ENCODE measurements at regions of chr10 and their contacts with region 1.

Region 1: DNA sequence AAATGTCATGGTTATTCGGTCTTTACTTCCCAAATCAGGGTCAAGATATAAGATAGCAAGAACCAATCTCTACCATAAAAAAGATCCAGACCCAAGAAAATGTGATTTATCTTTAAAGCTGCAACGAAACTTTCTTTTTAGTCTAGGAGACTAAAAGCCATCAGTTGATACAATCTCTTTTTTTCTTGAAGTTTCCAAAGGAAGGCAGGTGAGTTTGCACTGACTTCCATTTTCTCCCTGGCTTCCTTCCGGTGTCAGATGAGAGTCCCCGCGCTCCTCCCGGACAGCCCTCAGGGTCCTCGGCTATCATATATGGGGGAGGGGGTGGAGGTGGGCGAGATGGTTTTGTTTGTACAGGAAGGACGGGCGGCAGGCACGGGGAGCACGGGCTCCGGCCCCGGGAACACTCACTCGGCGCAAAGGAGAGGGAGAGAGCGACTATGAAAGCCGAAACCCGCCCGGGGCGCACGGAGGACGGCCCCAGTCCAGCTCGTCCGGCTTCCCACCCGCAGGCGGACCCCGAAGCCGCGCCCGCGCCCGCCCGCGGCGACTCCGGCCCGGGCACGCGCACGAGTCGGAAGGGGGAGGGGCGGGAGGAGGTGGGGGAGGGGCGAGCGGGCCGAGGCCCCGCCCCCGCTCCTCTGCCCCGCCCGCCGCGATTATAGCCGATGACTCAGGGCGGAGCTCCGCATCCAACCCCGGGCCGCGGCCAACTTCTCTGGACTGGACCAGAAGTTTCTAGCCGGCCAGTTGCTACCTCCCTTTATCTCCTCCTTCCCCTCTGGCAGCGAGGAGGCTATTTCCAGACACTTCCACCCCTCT is at the start of gene BAG3:
- DNase-seq: peak; percentile 93
- H3K4me3 Mint-ChIP-seq: peak within 1 kb of the TSS; percentile 99
- H3K27ac Mint-ChIP-seq: peak within 1 kb of the TSS; percentile 99
- H3K4me1 Mint-ChIP-seq: peaks cover 40% of the 10 kb centered on the region
- H3K27me3 Mint-ChIP-seq: no peaks in the 10 kb centered on the region
- total RNA-seq, gene BAG3: 27.7 and 29.1 TPM in 2 replicates

Region 2: GRCh38 chr10:118754720-118755480 is 896.0 kb before region 1 on chr10 and contains the start of gene CACUL1:
- intact Hi-C with region 1: loop called (anchors 10 kb)
- DNase-seq: peak; percentile 100
- H3K4me3 Mint-ChIP-seq: peak within 1 kb of the TSS; percentile 96
- H3K27ac Mint-ChIP-seq: peak within 1 kb of the TSS; percentile 88
- H3K4me1 Mint-ChIP-seq: peaks cover 29% of the 10 kb centered on the region
- H3K27me3 Mint-ChIP-seq: peaks cover 13% of the 10 kb centered on the region
- total RNA-seq, gene CACUL1: 27.6 and 29.4 TPM in 2 replicates

Region 3: DNA sequence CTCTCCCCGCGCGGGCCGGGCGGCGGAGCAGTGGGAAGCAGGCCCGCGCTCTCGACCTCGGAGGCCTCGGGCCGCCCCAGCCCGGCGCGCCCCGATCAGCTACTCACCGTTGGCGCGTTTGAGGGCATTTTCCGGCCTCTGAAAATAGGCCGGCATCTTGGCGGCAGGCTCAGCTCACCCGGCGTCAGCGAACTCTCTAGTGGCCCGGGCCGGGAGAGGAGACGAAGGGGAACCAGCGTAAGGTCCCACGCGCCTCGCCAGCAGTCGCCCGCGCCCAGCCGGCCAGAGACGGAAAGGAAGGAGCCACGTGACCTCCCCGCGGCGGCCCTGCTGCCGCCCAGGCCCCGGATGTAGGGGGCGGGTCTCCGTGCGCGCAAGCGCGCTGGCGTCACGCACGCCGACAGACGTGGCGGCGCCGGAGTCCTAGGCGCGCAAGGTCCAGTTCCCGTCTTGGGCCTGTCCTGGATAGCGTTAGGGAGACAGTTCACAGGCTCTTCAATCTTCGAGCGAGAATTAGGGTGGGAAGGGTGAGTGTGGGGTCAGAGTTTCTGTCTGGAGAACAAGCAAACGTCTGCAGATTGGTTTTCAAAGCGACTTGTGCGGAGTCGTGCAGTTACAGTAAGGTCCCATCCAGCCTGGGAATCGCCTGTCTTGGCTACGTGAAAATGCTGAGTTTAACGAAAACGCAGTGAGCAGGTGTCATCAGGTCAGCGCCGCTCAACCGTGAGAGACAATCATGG is 570.2 kb before region 1 on chr10 and contains the start of gene EIF3A:
- intact Hi-C with region 1: loop called (anchors 5 kb)
- DNase-seq: peak; percentile 99
- H3K4me3 Mint-ChIP-seq: peak within 1 kb of the TSS; percentile 87
- H3K27ac Mint-ChIP-seq: peak within 1 kb of the TSS; percentile 92
- H3K4me1 Mint-ChIP-seq: peaks cover 29% of the 10 kb centered on the region
- H3K27me3 Mint-ChIP-seq: no peaks in the 10 kb centered on the region
- total RNA-seq, gene EIF3A: 179 and 183 TPM in 2 replicates

Region 4: DNA sequence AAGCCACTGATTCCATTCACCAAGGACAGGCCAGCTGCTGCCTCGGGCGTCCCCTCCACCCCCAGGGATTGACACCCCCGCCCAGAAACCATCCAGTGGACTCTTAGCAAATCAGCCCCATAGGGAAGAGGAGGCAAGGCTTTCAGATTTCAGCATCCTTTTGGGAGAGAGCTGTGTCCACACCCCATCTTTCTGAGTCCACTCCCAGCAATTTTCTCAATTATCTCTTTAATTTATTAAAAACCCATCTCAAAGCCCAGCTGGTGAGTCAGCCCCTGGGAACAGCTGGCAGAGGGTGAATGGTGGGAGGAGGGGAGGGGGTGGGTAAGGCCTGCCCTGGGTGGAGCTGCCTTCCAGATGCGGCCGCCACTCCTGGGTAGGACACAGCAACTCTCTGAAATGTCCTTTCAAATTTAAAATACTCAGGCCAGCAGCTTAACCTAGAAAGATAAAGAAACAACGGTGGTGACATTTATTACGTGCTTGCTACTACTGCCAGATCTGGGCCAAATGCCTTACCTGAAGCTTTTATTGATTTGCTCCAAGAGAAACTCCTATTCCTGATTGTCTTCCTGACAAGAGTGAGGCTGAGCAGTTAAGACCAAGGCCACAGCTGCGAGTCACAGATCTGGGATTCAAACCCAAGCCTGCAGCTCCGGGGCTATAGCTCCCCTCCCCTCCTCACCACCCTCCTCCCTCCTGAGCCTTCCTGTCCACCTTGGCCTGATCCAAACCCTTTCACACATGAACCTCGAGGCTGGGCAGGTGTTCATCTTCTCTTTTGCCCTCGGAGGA is 228.8 kb before region 1 on chr10:
- intact Hi-C with region 1: no loop called
- DNase-seq: no peak
- H3K4me3 Mint-ChIP-seq: no peak overlapping the region
- H3K27ac Mint-ChIP-seq: no peak overlapping the region
- H3K4me1 Mint-ChIP-seq: peaks cover 1% of the 10 kb centered on the region
- H3K27me3 Mint-ChIP-seq: no peaks in the 10 kb centered on the region

Region 5: GRCh38 chr10:119517235-119518141 is 133.4 kb before region 1 on chr10:
- intact Hi-C with region 1: loop called (anchors 5 kb)
- DNase-seq: peak; percentile 87
- H3K4me3 Mint-ChIP-seq: peak overlapping the region; percentile 75
- H3K27ac Mint-ChIP-seq: peak overlapping the region; percentile 90
- H3K4me1 Mint-ChIP-seq: peaks cover 48% of the 10 kb centered on the region
- H3K27me3 Mint-ChIP-seq: no peaks in the 10 kb centered on the region

Region 6: GRCh38 chr10:119686439-119687191 is 35.7 kb after region 1 on chr10:
- intact Hi-C with region 1: loop called (anchors 2 kb)
- DNase-seq: peak; percentile 92
- H3K4me3 Mint-ChIP-seq: peak overlapping the region; percentile 59
- H3K27ac Mint-ChIP-seq: peak overlapping the region; percentile 42
- H3K4me1 Mint-ChIP-seq: peaks cover 23% of the 10 kb centered on the region
- H3K27me3 Mint-ChIP-seq: peaks cover 2% of the 10 kb centered on the region

Region 7: DNA sequence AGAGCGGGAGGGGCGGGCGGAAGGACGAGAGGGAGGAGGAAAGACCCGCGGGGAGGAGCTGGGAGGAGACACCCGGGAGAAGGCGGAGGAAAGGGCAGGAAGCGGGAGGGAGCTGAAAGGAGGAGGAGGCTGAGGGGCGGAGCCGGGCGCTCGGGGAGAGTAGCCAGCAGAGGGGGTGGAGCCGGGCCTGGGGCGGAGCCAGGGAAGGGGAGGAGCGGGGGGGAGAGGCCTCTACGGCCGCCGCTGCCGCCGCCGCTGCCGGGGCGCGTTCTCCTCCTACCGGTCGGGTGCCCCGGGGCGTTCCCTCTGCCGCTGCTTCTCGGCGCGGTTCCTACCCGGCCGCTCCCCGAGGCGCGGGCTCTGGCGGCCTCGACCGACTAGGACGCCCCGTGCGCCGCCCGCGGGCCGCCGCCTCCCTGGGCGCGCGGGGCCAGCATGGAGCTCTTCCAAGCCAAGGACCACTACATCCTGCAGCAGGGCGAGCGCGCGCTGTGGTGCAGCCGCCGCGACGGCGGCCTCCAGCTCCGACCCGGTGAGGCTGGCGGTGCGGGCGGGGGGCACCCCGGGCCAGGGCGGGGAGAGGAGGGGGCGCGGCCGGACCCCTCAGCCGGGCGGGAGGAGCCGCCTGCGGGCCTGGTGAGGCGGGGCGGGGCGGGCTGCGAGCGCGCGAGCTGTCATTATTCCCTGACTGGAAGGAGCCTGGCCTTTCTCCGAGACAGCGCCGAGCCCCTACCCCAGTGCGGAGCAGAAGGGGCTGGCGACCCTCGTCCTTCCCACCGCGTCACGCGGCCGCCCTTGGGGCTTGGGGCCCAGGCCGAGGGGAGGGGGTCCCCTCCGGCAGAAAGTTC is 75.1 kb after region 1 on chr10 and contains the start of gene INPP5F:
- intact Hi-C with region 1: loop called (anchors 1 kb)
- DNase-seq: peak; percentile 100
- H3K4me3 Mint-ChIP-seq: peak within 1 kb of the TSS; percentile 91
- H3K27ac Mint-ChIP-seq: peak within 1 kb of the TSS; percentile 86
- H3K4me1 Mint-ChIP-seq: peaks cover 37% of the 10 kb centered on the region
- H3K27me3 Mint-ChIP-seq: no peaks in the 10 kb centered on the region
- total RNA-seq, gene INPP5F: 18.1 and 18.3 TPM in 2 replicates

Measured in activated CD4-positive, alpha-beta T cell treated with anti-CD3 and anti-CD28 coated beads, Interleukin-2, amount 10 ng/mL, durations not matched to agents 24 days and 14 days (primary cell).